CD14-positive monocyte (primary cell): ENCODE measurements at regions of chr14 and their contacts with region 1.

Region 1: DNA sequence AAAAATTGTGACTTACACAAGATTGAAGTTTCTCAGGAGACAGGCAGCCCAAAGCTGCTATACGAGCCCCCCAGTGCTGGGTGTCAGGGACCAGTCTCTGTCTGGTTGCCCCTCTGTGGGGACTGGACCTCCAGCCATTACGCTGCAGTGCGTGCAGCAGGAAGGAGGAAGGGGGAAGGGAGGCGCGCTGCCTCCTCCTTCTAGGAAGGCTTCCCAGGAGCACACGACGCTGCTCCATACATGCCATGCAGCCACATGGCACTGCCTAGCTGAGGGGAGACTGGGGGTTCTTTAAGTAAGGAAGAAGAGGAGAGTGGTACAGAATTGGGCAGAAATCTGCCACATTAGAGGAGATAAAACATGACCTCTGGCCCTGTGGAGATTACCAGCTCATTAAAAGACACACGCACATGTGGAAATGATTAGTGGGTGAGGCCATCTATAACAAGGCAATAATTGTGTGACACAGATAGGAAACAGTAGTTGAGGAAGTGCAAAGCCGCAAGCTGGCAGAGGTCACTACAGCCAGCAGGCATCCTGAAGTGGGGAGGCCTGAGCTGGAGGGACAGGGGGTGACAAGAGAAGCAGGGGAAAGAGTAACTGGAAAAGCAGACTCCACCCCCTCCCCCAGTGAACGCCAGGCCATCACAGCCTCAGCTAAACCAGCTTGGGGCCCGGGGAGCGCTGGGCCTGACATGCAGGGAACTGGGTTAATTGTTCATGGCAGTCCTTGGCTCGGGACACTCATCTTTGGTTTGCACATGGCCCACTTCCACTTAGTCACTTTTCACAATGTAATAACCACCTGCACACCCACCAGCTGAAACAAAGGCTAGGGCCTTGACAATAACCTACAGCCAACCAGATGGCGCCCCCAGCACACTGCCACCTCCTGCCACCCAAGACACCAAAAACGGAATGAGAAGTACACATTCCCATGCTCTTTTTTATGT is 39.6 kb downstream of the CCDC88C start:
- DNase-seq: peak; percentile 77 to 81 (median 81)
- H3K4me3 ChIP-seq: peak overlapping the region in 1 of 3 experiments; percentile 60
- H3K4me3 Mint-ChIP-seq: peak overlapping the region; percentile 64 to 83
- H3K27ac ChIP-seq: peak overlapping the region; percentile 76 to 94
- H3K27ac Mint-ChIP-seq: peak overlapping the region; percentile 92 to 98 (median 97)
- H3K4me1 ChIP-seq: peaks cover 99 to 100% of the 10 kb centered on the region in 2 donors
- H3K4me1 Mint-ChIP-seq: peaks cover 100% of the 10 kb centered on the region
- H3K27me3 ChIP-seq: no peaks in the 10 kb centered on the region
- H3K27me3 Mint-ChIP-seq: peaks cover 0 to 2% (median 0%) of the 10 kb centered on the region in 3 donors
- CTCF ChIP-seq: no peak

Region 2: GRCh38 chr14:91388551-91388975 is 10.6 kb after region 1 on chr14:
- intact Hi-C with region 1: loop called in 1 of 2 experiments (anchors 1 kb)
- DNase-seq: peak; percentile 83 to 92 (median 90)
- H3K4me3 ChIP-seq: peak overlapping the region in 1 of 3 experiments; percentile 61
- H3K4me3 Mint-ChIP-seq: peak overlapping the region in 1 of 2 donors; percentile 71
- H3K27ac ChIP-seq: peak overlapping the region; percentile 83 to 84
- H3K27ac Mint-ChIP-seq: peak overlapping the region; percentile 81 to 91 (median 90)
- H3K4me1 ChIP-seq: peaks cover 62 to 68% of the 10 kb centered on the region in 2 donors
- H3K4me1 Mint-ChIP-seq: peaks cover 81% of the 10 kb centered on the region
- H3K27me3 ChIP-seq: no peaks in the 10 kb centered on the region
- H3K27me3 Mint-ChIP-seq: peaks cover 0 to 5% (median 0%) of the 10 kb centered on the region in 3 donors
- CTCF ChIP-seq: no peak